ENCODE measurements at regions of chr16 and their contacts with region 1.

Region 1: GRCh38 chr16:56356276-56357240 is 68.8 kb downstream of the AMFR start:
- DNase-seq: no peak
- H3K4me3 ChIP-seq: peak overlapping the region; percentile 48
- CTCF ChIP-seq: peak; percentile 93

Region 2: DNA sequence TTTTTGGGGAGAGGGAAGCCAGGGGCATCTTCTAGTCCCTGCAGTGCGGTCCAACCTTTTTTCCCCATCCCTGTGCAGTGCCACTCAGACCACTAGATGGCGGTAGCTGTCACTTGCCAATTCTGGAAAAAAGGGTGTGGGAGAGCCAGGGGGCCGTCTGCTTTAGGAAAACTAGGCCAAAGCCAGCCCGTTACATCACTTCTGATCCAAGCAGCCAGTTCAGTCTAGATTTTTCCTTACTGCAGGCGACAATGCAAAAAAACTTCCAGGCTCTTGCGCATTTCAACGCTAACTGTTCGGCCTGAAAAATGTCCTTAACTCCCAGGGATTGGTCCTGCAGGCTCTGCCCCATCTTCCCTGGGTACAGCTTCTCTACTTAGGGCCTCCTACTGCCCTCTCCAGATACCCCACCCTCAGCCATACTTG is 412.2 kb before region 1 on chr16:
- CTCF ChIA-PET with region 1: interaction called, 30 read pairs
- POLR2A ChIA-PET with region 1: no interaction called
- DNase-seq: no peak
- H3K4me3 ChIP-seq: no peak overlapping the region
- CTCF ChIP-seq: peak; percentile 95

Region 3: GRCh38 chr16:56269811-56270684 is 86.5 kb before region 1 on chr16:
- CTCF ChIA-PET with region 1: interaction called, 10 read pairs
- POLR2A ChIA-PET with region 1: no interaction called
- DNase-seq: peak; percentile 86
- H3K4me3 ChIP-seq: no peak overlapping the region
- CTCF ChIP-seq: peak; percentile 82

Region 4: DNA sequence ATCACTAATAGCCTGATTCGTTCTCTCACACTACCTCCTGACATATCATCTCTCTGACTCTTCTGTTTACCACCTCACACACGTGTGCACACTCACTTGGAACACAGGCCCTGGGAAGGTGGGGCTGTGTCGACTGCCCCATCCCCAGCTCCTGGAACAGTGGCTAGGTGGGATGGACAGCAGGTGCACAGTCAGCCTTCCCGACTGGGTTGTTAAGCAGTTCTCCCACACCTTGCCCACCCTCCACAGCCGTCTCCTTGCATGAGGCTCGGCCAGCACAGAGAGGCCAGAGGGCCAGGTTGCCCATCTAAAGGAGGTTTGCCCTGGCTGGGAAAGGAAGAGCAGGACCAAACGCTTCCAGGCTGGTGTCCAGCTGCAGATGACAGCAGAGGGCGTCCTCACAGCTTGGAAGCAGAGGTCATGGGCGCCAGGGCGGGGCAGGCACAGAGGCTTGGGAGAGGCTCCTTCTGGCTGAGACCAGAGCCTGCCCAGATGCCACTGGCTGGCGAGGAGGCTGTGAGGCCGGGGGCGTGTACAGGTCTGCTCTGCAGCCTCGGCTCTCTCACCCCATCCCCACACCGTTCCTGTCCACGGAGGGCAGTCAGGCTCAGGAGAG is 24.0 kb before region 1 on chr16:
- CTCF ChIA-PET with region 1: interaction called, 36 read pairs
- POLR2A ChIA-PET with region 1: no interaction called
- DNase-seq: no peak
- H3K4me3 ChIP-seq: no peak overlapping the region
- CTCF ChIP-seq: peak; percentile 67

Region 5: DNA sequence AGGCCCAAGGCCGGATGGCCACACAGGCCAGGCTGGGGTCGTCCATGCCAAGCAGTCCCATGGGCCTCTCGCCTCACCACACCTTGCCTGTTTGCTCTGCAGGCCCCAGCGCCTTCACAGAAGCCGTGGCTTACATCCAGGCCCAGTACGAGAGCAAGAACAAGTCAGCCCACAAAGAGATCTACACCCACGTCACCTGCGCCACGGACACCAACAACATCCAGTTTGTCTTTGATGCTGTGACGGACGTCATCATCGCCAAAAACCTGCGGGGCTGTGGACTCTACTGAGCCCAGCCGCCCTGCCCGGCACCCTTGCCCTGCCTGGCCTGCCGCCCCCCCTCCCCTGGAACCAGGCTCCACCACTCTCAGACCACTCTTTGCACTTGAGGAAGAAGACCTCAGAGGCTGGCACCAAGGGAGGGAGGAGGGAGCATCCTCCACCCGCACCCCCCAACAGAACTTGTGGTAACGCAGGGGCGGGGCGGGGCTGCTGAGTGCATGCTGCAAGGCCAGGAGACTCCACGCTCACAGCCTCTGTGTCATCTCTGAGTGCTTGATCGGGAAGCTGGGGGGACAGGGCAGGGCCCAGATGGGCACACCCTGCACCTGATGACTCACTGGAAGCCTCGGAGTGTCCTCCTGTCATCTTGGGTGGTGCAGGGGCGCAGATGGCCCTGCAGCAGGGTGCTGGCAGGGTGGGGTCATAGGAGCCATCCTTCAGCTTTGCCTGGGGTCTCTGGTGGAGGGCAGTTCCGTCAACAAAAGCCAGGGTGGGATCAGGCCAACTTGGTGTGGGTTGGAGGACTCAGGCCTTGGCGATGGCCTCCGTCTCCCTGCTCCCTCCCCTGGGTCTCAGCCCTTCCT is 12.7 kb before region 1 on chr16:
- CTCF ChIA-PET with region 1: interaction called, 40 read pairs
- POLR2A ChIA-PET with region 1: no interaction called
- DNase-seq: no peak
- H3K4me3 ChIP-seq: no peak overlapping the region
- CTCF ChIP-seq: no peak

Region 6: DNA sequence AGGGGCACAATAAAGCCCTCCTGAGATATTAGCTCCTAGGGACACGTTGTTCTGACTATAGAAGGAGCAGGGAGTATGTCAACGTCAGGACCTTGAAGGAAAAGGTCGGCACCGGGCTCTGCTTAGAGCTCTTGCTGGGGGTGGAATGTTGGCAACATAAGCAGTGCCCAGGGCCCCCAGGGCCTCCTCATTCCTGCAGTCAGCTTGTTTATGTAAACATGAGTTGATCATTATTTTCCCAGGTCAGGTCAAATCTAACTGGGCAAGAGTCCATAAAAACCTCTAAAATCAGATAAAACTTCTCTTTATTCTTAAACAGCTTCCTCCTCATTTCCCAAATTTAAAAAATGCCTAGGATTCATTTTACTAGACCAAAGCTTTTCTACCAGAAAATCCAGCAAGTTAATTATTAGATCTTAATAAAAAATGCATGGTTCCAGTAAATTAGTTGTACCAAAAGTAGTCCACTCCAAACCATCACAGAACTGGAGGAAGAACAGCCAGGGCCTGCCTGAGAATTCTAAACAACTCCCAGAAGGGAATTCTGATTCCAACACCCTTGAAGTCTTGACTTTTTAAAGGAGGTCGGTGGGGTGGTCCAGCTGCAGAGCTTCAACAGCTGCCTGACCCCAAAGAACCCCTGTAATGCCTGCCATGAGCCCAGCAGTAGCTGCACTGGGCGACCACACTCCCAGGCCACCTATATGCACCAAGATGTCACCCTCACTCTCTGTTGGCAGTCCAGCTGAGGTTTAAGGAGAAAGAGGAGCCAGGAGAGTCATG is 14.5 kb after region 1 on chr16:
- CTCF ChIA-PET with region 1: interaction called, 49 read pairs
- POLR2A ChIA-PET with region 1: interaction called, 3 read pairs
- DNase-seq: no peak
- H3K4me3 ChIP-seq: no peak overlapping the region
- CTCF ChIP-seq: no peak

Region 7: DNA sequence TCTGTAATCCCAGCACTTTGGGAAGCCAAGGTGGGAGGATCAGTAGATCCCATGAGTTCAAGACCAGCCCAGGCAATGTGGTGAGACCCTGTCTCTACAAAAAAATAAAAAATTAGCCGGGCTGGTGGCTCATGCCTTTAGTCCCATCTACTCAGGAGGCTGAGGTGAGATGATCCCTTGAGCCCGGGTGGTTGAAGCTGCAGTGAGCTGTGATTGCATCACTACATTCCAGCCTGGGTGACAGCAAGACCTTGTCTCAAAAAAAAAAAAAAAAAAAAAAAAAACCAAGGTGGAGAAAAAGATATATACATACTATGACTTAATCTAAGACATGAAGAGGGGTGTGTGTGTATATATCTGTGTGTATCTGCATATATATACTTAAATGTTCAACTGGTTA is 136.6 kb after region 1 on chr16:
- CTCF ChIA-PET with region 1: no interaction called
- POLR2A ChIA-PET with region 1: no interaction called
- DNase-seq: no peak
- H3K4me3 ChIP-seq: no peak overlapping the region
- CTCF ChIP-seq: no peak

Measured in AG04449 (cell line).